ENCODE measurements at regions of chr19 and their contacts with region 1.

Region 1: DNA sequence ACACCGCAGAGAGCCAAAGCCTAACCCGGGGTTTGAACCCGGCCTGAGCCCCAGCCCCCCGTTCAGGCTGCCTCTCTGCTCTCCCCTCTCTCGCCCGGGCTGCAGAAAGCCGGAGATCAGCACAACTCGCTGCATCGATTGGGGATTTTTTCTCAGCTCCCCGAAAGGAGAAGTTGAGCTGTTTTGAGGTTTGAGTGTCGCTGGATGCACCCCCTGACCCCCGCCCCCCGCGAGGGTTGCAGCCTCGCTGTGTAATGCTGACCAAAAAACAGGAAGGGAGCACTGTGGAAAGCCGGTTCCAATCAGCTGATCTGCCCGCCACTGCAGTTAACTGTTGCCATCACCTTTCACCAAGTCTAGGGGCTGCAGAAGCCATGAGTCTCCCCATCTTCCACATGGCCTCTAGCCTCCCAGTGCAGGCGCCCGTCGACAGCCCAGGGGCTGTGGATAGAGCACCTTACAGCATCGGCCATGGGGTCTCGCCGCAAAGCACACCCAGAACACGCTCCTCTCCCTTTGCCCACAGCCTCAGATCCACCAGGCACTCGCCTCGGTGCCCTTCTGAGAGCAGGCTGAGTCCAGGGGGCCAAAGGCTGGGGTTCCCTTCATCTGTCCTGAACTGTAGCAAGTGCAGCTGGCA is 34.5 kb downstream of the MYO9B start:
- H3K4me3 Mint-ChIP-seq: peak overlapping the region; percentile 76
- H3K27ac Mint-ChIP-seq: peak overlapping the region; percentile 90
- H3K4me1 Mint-ChIP-seq: peaks cover 90% of the 10 kb centered on the region
- H3K27me3 Mint-ChIP-seq: no peaks in the 10 kb centered on the region

Region 2: GRCh38 chr19:17125715-17126677 is 15.9 kb after region 1 on chr19:
- intact Hi-C with region 1: loop called (anchors 2 kb)
- H3K4me3 Mint-ChIP-seq: peak overlapping the region; percentile 68
- H3K27ac Mint-ChIP-seq: peak overlapping the region; percentile 89
- H3K4me1 Mint-ChIP-seq: peaks cover 77% of the 10 kb centered on the region
- H3K27me3 Mint-ChIP-seq: no peaks in the 10 kb centered on the region